ENCODE measurements at regions of chr18 and their contacts with region 1.

Region 1: GRCh38 chr18:8982416-8983184 is 119.9 kb upstream of the NDUFV2 start:
- DNase-seq: peak; percentile 58
- H3K4me3 ChIP-seq: no peak overlapping the region
- H3K27ac ChIP-seq: no peak overlapping the region
- H3K4me1 ChIP-seq: no peaks in the 10 kb centered on the region
- H3K27me3 ChIP-seq: no peaks in the 10 kb centered on the region
- CTCF ChIP-seq: peak; percentile 39 to 40
- POLR2A ChIP-seq: no peak

Region 2: GRCh38 chr18:8478166-8478967 is 504.2 kb before region 1 on chr18:
- CTCF ChIA-PET with region 1: interaction called, 35 read pairs
- POLR2A ChIA-PET with region 1: no interaction called
- dilution Hi-C with region 1: no loop called
- intact Hi-C with region 1: no loop called
- DNase-seq: peak; percentile 55
- H3K4me3 ChIP-seq: no peak overlapping the region
- H3K27ac ChIP-seq: no peak overlapping the region
- H3K4me1 ChIP-seq: no peaks in the 10 kb centered on the region
- H3K27me3 ChIP-seq: peaks cover 0 to 3% of the 10 kb centered on the region in 2 experiments
- CTCF ChIP-seq: peak; percentile 67 to 92
- POLR2A ChIP-seq: no peak

Region 3: DNA sequence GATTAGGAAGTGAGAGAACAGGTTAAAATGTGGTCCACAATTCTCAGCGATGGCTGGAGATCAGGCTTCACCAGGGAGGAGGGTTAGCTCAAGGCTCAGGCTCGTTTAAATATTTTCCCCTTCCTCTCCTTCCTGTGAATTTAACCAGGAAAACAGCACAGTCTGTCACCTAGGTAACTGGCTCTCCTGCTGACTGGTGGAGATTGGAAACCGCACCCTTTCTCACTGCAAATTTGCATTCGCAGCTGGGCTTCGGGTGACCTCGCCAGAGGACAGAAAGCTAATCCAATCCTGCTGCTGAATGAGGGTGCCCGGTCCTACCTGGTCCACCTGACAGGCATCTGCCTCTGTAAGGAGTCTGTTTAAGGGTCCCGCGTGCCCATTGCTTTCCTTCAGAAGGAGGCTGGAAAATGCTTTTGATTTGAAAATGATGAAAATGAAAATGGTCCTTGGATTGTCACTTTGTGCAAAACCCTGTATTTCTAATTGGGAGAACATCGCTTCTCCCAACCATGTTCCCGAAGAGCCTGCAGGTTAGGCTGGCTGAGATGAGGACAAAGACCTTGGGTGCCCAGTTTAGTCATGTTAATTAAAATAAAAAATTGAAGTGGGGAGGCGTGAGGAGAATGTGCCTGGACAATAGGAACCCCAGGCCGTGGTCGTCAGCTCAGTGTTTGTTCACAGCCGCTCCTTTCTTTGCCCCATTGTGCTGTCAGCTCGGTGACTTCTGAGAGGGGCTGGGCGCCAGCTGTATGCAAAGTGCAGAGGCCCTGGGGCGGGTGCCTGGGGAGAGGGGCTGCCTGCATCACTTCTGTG is 320.6 kb before region 1 on chr18:
- CTCF ChIA-PET with region 1: interaction called, 146 read pairs
- POLR2A ChIA-PET with region 1: no interaction called
- dilution Hi-C with region 1: no loop called
- intact Hi-C with region 1: no loop called
- DNase-seq: peak; percentile 68
- H3K4me3 ChIP-seq: peak overlapping the region in 1 of 3 experiments; percentile 23
- H3K27ac ChIP-seq: peak overlapping the region; percentile 37
- H3K4me1 ChIP-seq: peaks cover 26% of the 10 kb centered on the region
- H3K27me3 ChIP-seq: no peaks in the 10 kb centered on the region
- CTCF ChIP-seq: no peak
- POLR2A ChIP-seq: no peak